A673 (cell line): ENCODE measurements at regions of chr20 and their contacts with region 1.

Region 1: DNA sequence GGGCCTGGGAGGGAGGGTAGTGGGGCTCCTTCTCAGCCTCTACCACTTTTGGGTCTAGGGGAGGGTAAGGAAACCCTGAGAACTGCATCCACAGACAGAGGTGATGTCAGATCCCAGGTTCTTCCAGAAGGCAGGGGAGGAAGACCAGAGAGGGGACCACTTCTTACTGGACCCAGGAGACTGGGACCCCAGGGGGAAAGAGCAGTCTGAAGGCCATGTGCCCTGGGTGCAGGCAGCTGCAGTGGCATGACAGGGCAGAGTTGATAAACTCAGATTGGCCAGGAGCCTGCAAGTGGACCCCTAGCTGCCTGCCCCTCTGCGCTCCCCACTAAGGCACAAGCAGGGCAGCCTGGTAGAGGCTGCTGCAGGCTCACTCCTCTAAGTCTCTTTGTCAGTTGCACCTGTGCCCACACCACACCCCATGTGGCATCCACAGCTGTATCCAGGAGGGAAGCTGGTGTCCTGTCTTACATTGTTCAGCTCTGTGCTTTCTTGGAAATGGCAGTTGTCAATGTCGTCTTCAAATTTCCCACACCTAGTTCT is 2.7 kb downstream of the CST9L start:
- DNase-seq: no peak
- H3K4me3 ChIP-seq: no peak overlapping the region
- H3K27ac ChIP-seq: no peak overlapping the region
- H3K4me1 ChIP-seq: no peaks in the 10 kb centered on the region
- H3K27me3 ChIP-seq: no peaks in the 10 kb centered on the region
- CTCF ChIP-seq: no peak

Region 2: GRCh38 chr20:23245553-23246181 is 319.9 kb before region 1 on chr20:
- CTCF ChIA-PET with region 1: no interaction called
- POLR2A ChIA-PET with region 1: no interaction called
- intact Hi-C with region 1: no loop called
- DNase-seq: no peak
- H3K4me3 ChIP-seq: no peak overlapping the region
- H3K27ac ChIP-seq: no peak overlapping the region
- H3K4me1 ChIP-seq: no peaks in the 10 kb centered on the region
- H3K27me3 ChIP-seq: peaks cover 3% of the 10 kb centered on the region
- CTCF ChIP-seq: peak; percentile 35

Region 3: DNA sequence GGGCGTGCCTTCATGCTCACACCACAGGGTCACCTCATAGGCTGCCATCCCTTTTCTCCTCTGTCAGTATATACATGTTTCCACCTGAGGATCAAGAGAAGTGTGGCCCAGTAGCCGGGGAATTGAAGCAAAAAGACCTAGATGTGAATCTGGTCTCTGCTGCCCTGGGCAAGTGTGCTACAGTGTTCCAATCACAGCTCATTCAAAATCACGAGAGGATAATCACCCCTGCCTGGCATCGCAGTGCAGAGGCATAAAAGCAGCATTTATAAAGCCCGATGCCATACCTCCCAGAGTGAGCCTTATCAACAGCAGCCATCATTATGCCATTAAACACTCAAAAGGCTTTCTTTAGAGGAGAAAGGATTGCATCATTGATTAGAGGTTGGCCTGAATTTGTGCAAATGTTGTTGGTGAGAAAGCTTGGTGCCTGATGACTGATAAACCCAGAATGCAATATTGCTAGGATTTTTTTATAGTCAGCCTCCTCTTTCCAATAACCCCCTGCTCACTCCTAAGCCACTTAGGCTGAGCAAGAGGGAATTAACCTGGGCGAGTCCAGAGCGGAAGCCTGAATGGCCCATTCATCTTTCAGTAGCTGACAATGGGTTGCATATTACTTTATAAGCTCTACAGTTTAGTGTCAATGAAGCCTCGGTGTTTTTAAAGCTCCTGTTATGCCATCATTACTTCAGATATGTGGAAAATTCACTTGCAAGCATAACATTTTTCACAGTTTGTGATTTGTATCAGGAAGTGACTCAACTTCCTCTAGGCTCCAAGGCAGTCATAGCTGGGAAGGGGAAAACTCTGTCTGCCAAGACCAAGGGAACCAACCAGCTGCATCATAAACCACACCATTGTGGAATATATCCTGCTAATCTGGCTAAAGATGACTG is 307.5 kb before region 1 on chr20:
- CTCF ChIA-PET with region 1: no interaction called
- POLR2A ChIA-PET with region 1: interaction called, 18 read pairs
- intact Hi-C with region 1: no loop called
- DNase-seq: peak; percentile 94
- H3K4me3 ChIP-seq: no peak overlapping the region
- H3K27ac ChIP-seq: peak overlapping the region; percentile 93
- H3K4me1 ChIP-seq: peaks cover 28% of the 10 kb centered on the region
- H3K27me3 ChIP-seq: no peaks in the 10 kb centered on the region
- CTCF ChIP-seq: no peak

Region 4: GRCh38 chr20:23550232-23550631 is 15.3 kb before region 1 on chr20:
- CTCF ChIA-PET with region 1: no interaction called
- POLR2A ChIA-PET with region 1: no interaction called
- intact Hi-C with region 1: no loop called
- DNase-seq: no peak
- H3K4me3 ChIP-seq: no peak overlapping the region
- H3K27ac ChIP-seq: no peak overlapping the region
- H3K4me1 ChIP-seq: no peaks in the 10 kb centered on the region
- H3K27me3 ChIP-seq: no peaks in the 10 kb centered on the region
- CTCF ChIP-seq: no peak